Posterior cingulate gyrus (tissue), 11 donors: ENCODE measurements at regions of chr3 and their contacts with region 1.

Region 1: GRCh38 chr3:11651900-11652299 is 8.2 kb upstream of the VGLL4 start:
- DNase-seq: no peak

Region 2: GRCh38 chr3:11287404-11287803 is 364.5 kb before region 1 on chr3:
- intact Hi-C with region 1: no loop called
- DNase-seq: no peak

Region 3: GRCh38 chr3:11379233-11379823 is 272.6 kb before region 1 on chr3:
- intact Hi-C with region 1: loop called (anchors 1 kb)
- DNase-seq: no peak

Region 4: GRCh38 chr3:11482021-11482420 is 169.9 kb before region 1 on chr3:
- intact Hi-C with region 1: no loop called
- DNase-seq: peak in 9 of 10 donors; percentile 25 to 92 (median 63)

Region 5: DNA sequence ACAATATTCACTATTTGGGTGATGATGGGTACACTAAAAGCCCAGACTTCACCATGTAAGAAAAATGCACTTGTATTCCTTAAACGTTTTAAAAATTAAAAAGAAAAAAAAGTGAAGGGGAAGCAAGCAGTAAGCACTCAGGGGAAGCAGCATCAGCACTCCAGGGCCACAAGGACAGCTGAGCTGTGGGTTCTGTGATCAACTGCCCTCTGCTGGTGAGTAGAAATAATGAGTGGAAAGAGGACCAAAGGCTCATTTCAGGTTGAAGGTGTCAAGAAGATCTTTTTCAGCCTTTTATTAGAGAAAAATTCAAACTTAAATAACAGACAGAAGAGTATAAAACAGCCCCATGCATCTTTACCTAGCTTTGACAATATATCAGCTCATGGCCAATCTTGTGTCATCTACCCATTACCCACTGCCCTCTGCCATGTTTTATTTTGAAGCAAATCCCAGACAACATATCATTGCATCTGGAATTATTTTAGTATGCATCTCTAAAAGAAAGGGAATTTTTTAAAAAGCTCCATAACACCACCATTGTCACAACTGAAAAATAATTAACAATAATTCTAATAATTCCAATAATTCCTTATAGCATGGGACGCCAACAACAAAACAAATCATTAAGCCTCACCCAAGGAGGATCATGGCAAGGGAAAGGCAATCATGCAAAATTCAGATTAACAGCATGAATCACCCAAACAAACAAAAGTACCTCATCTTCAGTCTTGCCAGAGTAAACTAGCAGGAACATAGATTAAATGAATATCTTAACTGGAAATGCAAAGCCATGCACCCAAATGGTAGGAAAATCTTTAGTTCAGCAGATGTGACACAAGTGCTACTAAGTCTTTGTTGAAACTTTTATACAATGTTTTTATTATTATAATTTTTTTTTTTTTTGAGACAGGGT is 152.3 kb after region 1 on chr3:
- intact Hi-C with region 1: loop called (anchors 10 kb)
- DNase-seq: peak in 5 of 10 donors; percentile 13 to 86 (median 26)

Region 6: GRCh38 chr3:11835028-11835639 is 183.2 kb after region 1 on chr3:
- intact Hi-C with region 1: loop called (anchors 10 kb)
- DNase-seq: no peak